IMR-90 (cell line): ENCODE measurements at regions of chr5 and their contacts with region 1.

Region 1: GRCh38 chr5:120803282-120803681 is 339.2 kb downstream of the PRR16 start:
- DNase-seq: peak; percentile 54
- ATAC-seq: peak; percentile 59
- H3K4me3 ChIP-seq: no peak overlapping the region
- H3K27ac ChIP-seq: no peak overlapping the region
- H3K4me1 ChIP-seq: peaks cover 4% of the 10 kb centered on the region; the same call in 1 of the 2 replicates
- H3K27me3 ChIP-seq: no peaks in the 10 kb centered on the region
- CTCF ChIP-seq: peak; percentile 43
- POLR2A ChIP-seq: no peak
- RAD21 ChIP-seq: peak; percentile 53

Region 2: DNA sequence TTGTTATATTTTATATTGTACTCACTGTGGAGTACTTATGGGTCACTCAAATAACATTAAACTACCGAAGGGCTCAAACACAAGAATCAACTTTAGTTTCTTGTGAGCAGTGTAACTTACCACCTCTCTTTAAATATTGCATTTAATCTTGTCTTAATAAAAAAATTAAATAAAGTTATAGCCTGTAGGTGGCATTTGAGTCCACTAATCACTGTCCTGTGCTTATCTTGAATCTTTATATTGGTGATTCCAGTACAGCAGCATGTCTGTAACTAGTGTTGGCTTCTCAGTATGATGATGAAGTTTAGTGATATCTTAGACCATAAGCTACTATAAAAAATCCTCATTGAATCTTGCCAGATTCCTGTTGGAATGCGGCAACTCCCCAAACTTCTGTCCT is 860.1 kb before region 1 on chr5:
- CTCF ChIA-PET with region 1: no interaction called
- POLR2A ChIA-PET with region 1: no interaction called
- dilution Hi-C with region 1: no loop called
- in situ Hi-C with region 1: no loop called
- intact Hi-C with region 1: loop called (anchors 2 kb)
- DNase-seq: peak; percentile 28
- ATAC-seq: peak; percentile 75
- H3K4me3 ChIP-seq: no peak overlapping the region
- H3K27ac ChIP-seq: no peak overlapping the region
- H3K4me1 ChIP-seq: no peaks in the 10 kb centered on the region
- H3K27me3 ChIP-seq: no peaks in the 10 kb centered on the region
- CTCF ChIP-seq: peak; percentile 50
- POLR2A ChIP-seq: no peak
- RAD21 ChIP-seq: peak; percentile 58

Region 3: DNA sequence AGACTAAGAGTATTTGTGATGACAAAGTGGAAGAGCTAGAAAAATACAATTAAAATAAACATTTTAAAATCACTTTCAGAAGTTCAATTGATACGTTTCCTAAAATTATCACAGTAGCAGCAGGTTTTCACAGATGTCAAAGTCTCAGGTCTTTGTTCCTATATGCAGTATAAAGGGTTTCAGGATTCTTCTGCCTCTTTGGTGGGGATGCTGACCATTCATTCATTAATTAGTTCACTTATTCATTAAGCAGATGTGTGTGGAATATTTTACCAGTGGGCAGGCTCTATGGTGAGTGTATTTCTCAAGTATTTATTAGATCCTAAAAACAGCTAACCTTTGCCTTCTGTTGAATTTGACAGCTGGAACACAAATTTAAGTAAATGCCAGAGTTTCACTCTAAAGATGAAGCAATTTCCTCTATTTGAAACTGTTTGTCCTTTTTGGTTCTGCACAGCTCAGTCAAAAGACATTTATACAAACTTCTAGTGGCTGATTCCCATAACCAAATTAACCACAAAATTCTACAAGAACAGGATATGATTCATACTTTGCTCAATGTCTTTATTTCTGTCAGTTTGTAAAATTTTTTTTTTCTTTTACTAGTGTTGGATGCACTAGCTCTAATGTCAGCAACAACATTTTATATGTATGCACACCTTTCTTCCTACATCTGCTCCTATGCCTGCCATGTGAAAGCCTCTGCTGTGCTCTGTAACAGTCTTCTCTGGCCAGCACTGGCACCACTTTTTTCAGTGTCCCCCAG is 415.1 kb before region 1 on chr5:
- CTCF ChIA-PET with region 1: no interaction called
- POLR2A ChIA-PET with region 1: no interaction called
- dilution Hi-C with region 1: no loop called
- in situ Hi-C with region 1: no loop called
- intact Hi-C with region 1: loop called (anchors 10 kb)
- DNase-seq: peak; percentile 95
- ATAC-seq: peak; percentile 87
- H3K4me3 ChIP-seq: no peak overlapping the region
- H3K27ac ChIP-seq: peak overlapping the region; percentile 92
- H3K4me1 ChIP-seq: peaks cover 7% of the 10 kb centered on the region
- H3K27me3 ChIP-seq: no peaks in the 10 kb centered on the region
- CTCF ChIP-seq: no peak
- POLR2A ChIP-seq: no peak
- RAD21 ChIP-seq: no peak

Region 4: DNA sequence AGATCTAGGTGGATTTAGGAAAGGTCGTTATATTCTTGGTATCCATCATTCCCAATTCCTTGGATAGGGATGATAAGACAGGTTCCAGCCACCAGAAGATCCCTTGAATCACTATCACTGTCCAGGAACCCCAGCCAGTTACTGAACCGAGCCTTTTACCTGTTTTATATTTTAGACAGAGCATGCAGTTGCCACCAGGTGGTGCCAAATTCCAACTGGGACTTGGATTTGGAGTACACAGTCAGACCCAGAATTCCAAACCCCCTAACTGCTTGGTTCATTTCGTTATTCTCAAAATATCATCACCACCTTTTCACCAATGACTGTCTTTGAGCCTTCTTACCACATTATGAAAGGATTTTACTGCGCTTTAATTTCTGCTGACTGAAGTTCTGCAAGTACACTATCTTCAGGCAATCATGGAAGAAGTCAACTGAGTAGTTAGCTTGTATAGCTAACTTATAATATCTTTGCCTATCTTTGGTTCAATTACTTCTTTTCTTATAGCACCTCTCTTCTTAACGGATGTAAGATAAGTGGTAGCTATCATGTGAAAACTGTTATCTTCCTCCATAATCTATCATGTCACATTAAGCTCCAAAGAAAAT is 147.3 kb before region 1 on chr5:
- CTCF ChIA-PET with region 1: no interaction called
- POLR2A ChIA-PET with region 1: no interaction called
- dilution Hi-C with region 1: no loop called
- in situ Hi-C with region 1: no loop called
- intact Hi-C with region 1: loop called (anchors 5 kb)
- DNase-seq: peak; percentile 22
- ATAC-seq: no peak
- H3K4me3 ChIP-seq: no peak overlapping the region
- H3K27ac ChIP-seq: no peak overlapping the region
- H3K4me1 ChIP-seq: no peaks in the 10 kb centered on the region
- H3K27me3 ChIP-seq: no peaks in the 10 kb centered on the region
- CTCF ChIP-seq: peak; percentile 58
- POLR2A ChIP-seq: no peak
- RAD21 ChIP-seq: peak; percentile 55

Region 5: GRCh38 chr5:121189342-121190305 is 386.3 kb after region 1 on chr5:
- CTCF ChIA-PET with region 1: no interaction called
- POLR2A ChIA-PET with region 1: no interaction called
- dilution Hi-C with region 1: no loop called
- in situ Hi-C with region 1: no loop called
- intact Hi-C with region 1: loop called (anchors 10 kb)
- DNase-seq: peak; percentile 50
- ATAC-seq: peak; percentile 68
- H3K4me3 ChIP-seq: no peak overlapping the region
- H3K27ac ChIP-seq: no peak overlapping the region
- H3K4me1 ChIP-seq: no peaks in the 10 kb centered on the region
- H3K27me3 ChIP-seq: no peaks in the 10 kb centered on the region
- CTCF ChIP-seq: no peak
- POLR2A ChIP-seq: no peak
- RAD21 ChIP-seq: no peak